ENCODE measurements at regions of chr7 and their contacts with region 1.

Region 1: DNA sequence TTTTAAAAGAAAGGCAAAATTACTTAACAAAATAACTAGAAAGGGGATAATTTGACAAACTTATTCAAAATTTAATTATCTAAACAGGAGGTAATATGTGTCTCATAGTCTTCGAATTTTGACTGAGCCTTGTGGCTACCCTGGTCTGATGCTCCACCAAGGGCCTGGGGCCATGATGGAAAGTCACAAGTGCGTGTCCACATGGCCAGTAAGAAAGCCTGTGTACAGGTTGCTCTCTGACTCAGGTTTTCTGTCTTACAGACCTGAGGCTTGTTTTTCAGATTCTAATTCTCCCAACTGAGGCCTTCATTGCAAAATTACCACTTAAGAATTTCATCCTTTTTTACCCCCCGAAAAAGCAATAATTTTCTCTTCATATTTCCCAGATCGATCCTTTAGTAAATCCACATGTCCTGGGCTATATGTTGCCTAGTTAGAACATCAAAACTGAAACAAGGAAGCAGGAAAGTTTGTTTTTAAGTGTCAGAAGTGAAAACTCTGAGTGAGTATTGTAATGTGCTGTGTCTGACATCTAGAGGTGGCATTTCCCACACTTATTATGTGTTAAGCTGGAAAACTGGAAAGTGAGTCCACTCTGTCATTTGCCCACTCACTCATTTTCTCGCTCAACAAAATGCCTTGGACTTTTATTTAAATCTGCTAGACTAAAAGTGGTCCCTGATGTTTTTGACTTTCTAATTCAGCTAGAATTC is 10.0 kb downstream of the CYP3A43 start:
- DNase-seq: peak in 1 of 2 experiments; percentile 26
- ATAC-seq: peak; percentile 46 to 76; a peak in 4 of 6 replicates
- H3K4me3 ChIP-seq: no peak overlapping the region
- H3K27ac ChIP-seq: peak overlapping the region; percentile 19 to 23; a peak in 2 of 6 replicates
- H3K4me1 ChIP-seq: no peaks in the 10 kb centered on the region
- CTCF ChIP-seq: peak; percentile 56
- EP300 ChIP-seq: no peak
- POLR2A ChIP-seq: no peak
- RAD21 ChIP-seq: peak; percentile 58 to 74; a peak in 4 of 5 replicates

Region 2: GRCh38 chr7:99631295-99632109 is 206.3 kb before region 1 on chr7:
- CTCF ChIA-PET with region 1: interaction called, 10 read pairs
- POLR2A ChIA-PET with region 1: no interaction called
- DNase-seq: peak; percentile 48 to 56
- ATAC-seq: peak; percentile 86 to 87
- H3K4me3 ChIP-seq: no peak overlapping the region
- H3K27ac ChIP-seq: peak overlapping the region in 1 of 2 experiments; percentile 15; a peak in 2 of 6 replicates
- H3K4me1 ChIP-seq: no peaks in the 10 kb centered on the region
- CTCF ChIP-seq: peak; percentile 63
- EP300 ChIP-seq: no peak
- POLR2A ChIP-seq: no peak
- RAD21 ChIP-seq: peak; percentile 83 to 87

Region 3: GRCh38 chr7:99794585-99795502 is 43.0 kb before region 1 on chr7:
- CTCF ChIA-PET with region 1: no interaction called
- POLR2A ChIA-PET with region 1: no interaction called
- DNase-seq: peak; percentile 20 to 58
- ATAC-seq: peak; percentile 76
- H3K4me3 ChIP-seq: no peak overlapping the region
- H3K27ac ChIP-seq: peak overlapping the region; percentile 72 to 75
- H3K4me1 ChIP-seq: peaks cover 32% of the 10 kb centered on the region
- CTCF ChIP-seq: no peak
- EP300 ChIP-seq: 0 out of 5 replicates have a peak, but pooled peaks of 1 of the 2 experiments have one; percentile 29
- POLR2A ChIP-seq: no peak
- RAD21 ChIP-seq: no peak

Measured in A549 (cell line).